Activated CD8-positive, alpha-beta T cell treated with anti-CD3 and anti-CD28 coated beads, Interleukin-2, amount 10 ng/mL, durations not matched to agents 7 days and 5 days (primary cell): ENCODE measurements at regions of chrX and their contacts with region 1.

Region 1: DNA sequence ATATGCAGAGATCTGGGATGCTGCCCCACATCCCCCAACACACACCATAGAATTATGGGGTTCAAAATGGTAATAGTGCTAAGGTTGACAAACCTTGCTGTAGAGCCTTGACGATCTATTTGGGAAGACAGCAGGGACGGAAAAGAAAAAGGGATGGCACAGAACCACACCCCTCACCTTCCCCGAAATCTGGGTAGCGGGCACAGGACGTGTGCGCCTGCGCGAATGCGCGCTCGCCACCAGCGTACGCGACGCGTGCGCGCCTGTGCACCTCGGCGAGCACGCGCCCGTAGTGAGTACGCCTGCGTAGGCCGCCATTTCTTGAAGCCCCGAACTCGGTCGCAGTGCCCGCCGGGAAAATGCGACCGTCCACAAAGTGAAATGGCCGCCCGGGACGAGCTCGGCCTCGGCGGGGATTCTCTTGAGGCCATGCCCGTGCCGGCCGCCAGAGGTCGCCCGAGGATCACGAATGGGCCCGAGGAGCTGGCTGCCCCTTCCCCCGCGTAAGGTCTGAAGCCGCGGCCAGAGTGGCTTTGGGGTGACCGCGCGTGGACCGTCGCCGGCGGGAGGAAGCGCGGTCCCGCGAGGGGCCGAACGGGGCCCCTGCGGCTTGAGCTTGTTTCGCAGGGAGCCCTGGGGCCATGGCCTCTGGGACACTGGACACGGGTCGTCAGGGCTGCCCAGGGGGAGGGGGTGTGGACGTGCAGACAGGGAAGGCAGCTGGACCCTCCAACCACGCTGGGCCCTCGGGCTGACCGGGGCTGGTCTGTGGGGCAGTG is 43.6 kb downstream of the ZNF185 start:
- DNase-seq: peak; percentile 92
- ATAC-seq: peak; percentile 98
- H3K4me3 Mint-ChIP-seq: peak overlapping the region; percentile 85
- H3K27ac Mint-ChIP-seq: peak overlapping the region; percentile 64
- H3K4me1 Mint-ChIP-seq: peaks cover 15% of the 10 kb centered on the region
- H3K27me3 Mint-ChIP-seq: no peaks in the 10 kb centered on the region

Region 2: DNA sequence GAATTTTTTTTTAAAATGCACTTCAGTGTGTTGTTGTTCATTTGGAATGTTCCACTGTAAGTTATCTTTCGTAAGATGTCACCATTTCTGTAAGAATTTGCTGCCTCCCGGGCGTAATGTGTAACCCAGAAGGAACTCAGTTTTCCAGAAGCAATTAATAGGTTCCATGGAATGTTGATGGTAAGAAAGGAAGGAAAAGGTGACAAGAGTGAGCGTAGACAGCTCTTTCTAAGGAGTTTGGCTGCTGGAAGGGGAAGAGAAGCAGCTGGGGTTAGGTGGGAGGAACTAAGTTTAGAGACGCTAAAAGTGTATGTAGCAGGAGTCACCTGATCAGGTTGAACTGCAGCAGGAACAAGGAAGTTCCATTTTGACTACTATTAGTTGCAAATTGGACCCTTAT is 16.5 kb after region 1 on chrX:
- CTCF ChIA-PET with region 1: interaction called, 24 read pairs
- POLR2A ChIA-PET with region 1: no interaction called
- DNase-seq: no peak
- ATAC-seq: no peak
- H3K4me3 Mint-ChIP-seq: peak overlapping the region; percentile 56
- H3K27ac Mint-ChIP-seq: peak overlapping the region; percentile 84
- H3K4me1 Mint-ChIP-seq: peaks cover 13% of the 10 kb centered on the region
- H3K27me3 Mint-ChIP-seq: no peaks in the 10 kb centered on the region

Region 3: GRCh38 chrX:153032397-153033118 is 91.0 kb after region 1 on chrX:
- CTCF ChIA-PET with region 1: interaction called, 10 read pairs
- POLR2A ChIA-PET with region 1: no interaction called
- DNase-seq: peak; percentile 68
- ATAC-seq: peak; percentile 83
- H3K4me3 Mint-ChIP-seq: peak overlapping the region; percentile 79
- H3K27ac Mint-ChIP-seq: peak overlapping the region; percentile 94
- H3K4me1 Mint-ChIP-seq: peaks cover 12% of the 10 kb centered on the region
- H3K27me3 Mint-ChIP-seq: no peaks in the 10 kb centered on the region

Region 4: GRCh38 chrX:153507484-153508178 is 566.1 kb after region 1 on chrX:
- CTCF ChIA-PET with region 1: interaction called, 16 read pairs
- POLR2A ChIA-PET with region 1: no interaction called
- DNase-seq: peak; percentile 85
- ATAC-seq: peak; percentile 100
- H3K4me3 Mint-ChIP-seq: no peak overlapping the region
- H3K27ac Mint-ChIP-seq: no peak overlapping the region
- H3K4me1 Mint-ChIP-seq: peaks cover 6% of the 10 kb centered on the region
- H3K27me3 Mint-ChIP-seq: no peaks in the 10 kb centered on the region

Region 5: GRCh38 chrX:153667956-153668396 is 726.5 kb after region 1 on chrX:
- CTCF ChIA-PET with region 1: interaction called, 18 read pairs
- POLR2A ChIA-PET with region 1: no interaction called
- DNase-seq: peak; percentile 81
- ATAC-seq: peak; percentile 85
- H3K4me3 Mint-ChIP-seq: peak overlapping the region; percentile 73
- H3K27ac Mint-ChIP-seq: no peak overlapping the region
- H3K4me1 Mint-ChIP-seq: peaks cover 9% of the 10 kb centered on the region
- H3K27me3 Mint-ChIP-seq: peaks cover 14% of the 10 kb centered on the region